Activated CD4-positive, alpha-beta T cell treated with anti-CD3 and anti-CD28 coated beads, Interleukin-2, amount 10 ng/mL, durations not matched to agents 24 days and 14 days (primary cell): ENCODE measurements at regions of chr12 and their contacts with region 1.

Region 1: GRCh38 chr12:19833775-19834501 is 394.6 kb downstream of the AEBP2 start:
- DNase-seq: no peak
- H3K4me3 Mint-ChIP-seq: no peak overlapping the region
- H3K27ac Mint-ChIP-seq: peak overlapping the region; percentile 71
- H3K4me1 Mint-ChIP-seq: peaks cover 8% of the 10 kb centered on the region
- H3K27me3 Mint-ChIP-seq: no peaks in the 10 kb centered on the region

Region 2: DNA sequence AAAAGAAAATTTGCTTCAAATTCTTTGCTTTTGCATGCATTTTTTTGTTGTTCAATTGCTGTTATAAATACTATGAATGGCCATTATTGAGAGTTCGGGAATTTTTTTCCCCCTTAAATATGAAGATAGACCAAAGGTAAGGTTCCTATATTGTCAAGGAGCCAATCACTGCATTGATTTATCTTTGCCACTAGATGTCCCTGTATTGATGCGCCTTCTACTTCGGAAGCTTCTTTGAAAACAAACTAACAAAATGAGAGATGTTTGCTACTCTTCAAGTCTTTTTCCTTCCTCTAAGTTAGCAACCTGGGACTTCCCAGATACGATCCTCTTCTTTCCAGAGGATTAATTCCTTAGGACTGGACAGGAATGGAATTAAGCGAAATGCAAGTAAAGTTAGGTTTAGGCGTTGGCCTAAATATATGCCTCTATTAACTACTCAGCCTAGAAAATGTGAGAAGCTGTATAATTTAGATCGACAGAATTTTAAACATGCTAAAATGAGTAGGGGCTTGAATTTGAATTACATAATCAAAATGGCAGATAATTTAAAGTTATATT is 76.5 kb before region 1 on chr12:
- intact Hi-C with region 1: loop called (anchors 1 kb)
- DNase-seq: no peak
- H3K4me3 Mint-ChIP-seq: no peak overlapping the region
- H3K27ac Mint-ChIP-seq: no peak overlapping the region
- H3K4me1 Mint-ChIP-seq: peaks cover 2% of the 10 kb centered on the region
- H3K27me3 Mint-ChIP-seq: no peaks in the 10 kb centered on the region

Region 3: GRCh38 chr12:19800884-19801283 is 33.1 kb before region 1 on chr12:
- intact Hi-C with region 1: loop called (anchors 1 kb)
- DNase-seq: no peak
- H3K4me3 Mint-ChIP-seq: no peak overlapping the region
- H3K27ac Mint-ChIP-seq: peak overlapping the region; percentile 68
- H3K4me1 Mint-ChIP-seq: peaks cover 2% of the 10 kb centered on the region
- H3K27me3 Mint-ChIP-seq: no peaks in the 10 kb centered on the region

Region 4: GRCh38 chr12:19811922-19812321 is 22.0 kb before region 1 on chr12:
- intact Hi-C with region 1: no loop called
- DNase-seq: no peak
- H3K4me3 Mint-ChIP-seq: no peak overlapping the region
- H3K27ac Mint-ChIP-seq: no peak overlapping the region
- H3K4me1 Mint-ChIP-seq: no peaks in the 10 kb centered on the region
- H3K27me3 Mint-ChIP-seq: no peaks in the 10 kb centered on the region

Region 5: GRCh38 chr12:19894803-19895202 is 60.9 kb after region 1 on chr12:
- intact Hi-C with region 1: loop called (anchors 1 kb)
- DNase-seq: no peak
- H3K4me3 Mint-ChIP-seq: no peak overlapping the region
- H3K27ac Mint-ChIP-seq: peak overlapping the region; percentile 87
- H3K4me1 Mint-ChIP-seq: peaks cover 7% of the 10 kb centered on the region
- H3K27me3 Mint-ChIP-seq: no peaks in the 10 kb centered on the region

Region 6: GRCh38 chr12:19908825-19909224 is 74.9 kb after region 1 on chr12:
- intact Hi-C with region 1: no loop called
- DNase-seq: no peak
- H3K4me3 Mint-ChIP-seq: no peak overlapping the region
- H3K27ac Mint-ChIP-seq: no peak overlapping the region
- H3K4me1 Mint-ChIP-seq: no peaks in the 10 kb centered on the region
- H3K27me3 Mint-ChIP-seq: no peaks in the 10 kb centered on the region

Region 7: GRCh38 chr12:20030826-20031225 is 196.9 kb after region 1 on chr12:
- intact Hi-C with region 1: no loop called
- DNase-seq: no peak
- H3K4me3 Mint-ChIP-seq: no peak overlapping the region
- H3K27ac Mint-ChIP-seq: no peak overlapping the region
- H3K4me1 Mint-ChIP-seq: no peaks in the 10 kb centered on the region
- H3K27me3 Mint-ChIP-seq: no peaks in the 10 kb centered on the region